T-cell (primary cell): ENCODE measurements at regions of chr2 and their contacts with region 1.

Region 1: DNA sequence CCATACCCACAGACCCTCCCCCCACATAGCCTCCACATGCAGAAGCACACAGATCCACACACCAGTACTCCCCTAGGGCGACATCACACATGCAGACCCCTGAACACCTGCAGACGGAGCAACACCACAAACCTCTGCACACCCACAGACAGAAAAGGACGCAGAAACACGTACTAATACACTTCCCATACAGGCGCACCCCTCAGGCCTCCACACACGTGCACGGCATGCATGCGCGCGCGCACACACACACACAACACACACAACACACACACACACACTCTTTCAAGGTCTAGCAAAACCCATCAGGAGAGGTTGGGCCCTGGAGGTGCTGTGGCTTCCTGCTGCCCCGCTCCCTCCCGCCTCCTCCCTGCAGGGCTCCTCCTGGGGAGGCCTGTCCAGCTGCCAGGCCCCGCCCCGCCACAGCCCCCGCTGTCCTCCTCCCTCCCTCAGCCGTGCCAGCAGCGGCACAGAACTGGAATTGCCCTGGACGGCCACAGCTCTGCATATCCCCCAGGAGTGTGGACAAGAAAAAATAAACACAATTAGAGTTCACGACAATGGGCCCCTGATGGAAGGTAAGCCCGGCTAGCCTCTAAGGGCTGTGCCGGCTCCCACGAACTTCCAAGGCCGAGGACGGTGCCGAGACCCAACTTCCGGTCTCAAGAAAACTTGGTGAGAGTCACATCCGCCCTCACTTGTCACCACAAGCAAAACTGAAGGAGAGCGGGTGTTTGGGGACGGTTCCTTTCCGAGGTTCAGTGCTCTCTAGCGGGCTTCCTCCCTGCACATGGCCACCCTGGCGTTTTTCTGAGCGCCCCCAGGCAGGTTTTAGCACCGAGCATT is 6.8 kb downstream of the ZFP36L2 start:
- DNase-seq: peak; percentile 71 to 91 (median 80)
- ATAC-seq: peak; percentile 44 to 58 (median 48)
- H3K4me3 ChIP-seq: peak overlapping the region; percentile 86 to 98
- H3K4me3 Mint-ChIP-seq: peak overlapping the region; percentile 74 to 98 (median 91)
- H3K27ac ChIP-seq: peak overlapping the region; percentile 94
- H3K27ac Mint-ChIP-seq: peak overlapping the region; percentile 94 to 97
- H3K4me1 ChIP-seq: peaks cover 27 to 67% of the 10 kb centered on the region in 2 experiments
- H3K4me1 Mint-ChIP-seq: peaks cover 52 to 59% (median 58%) of the 10 kb centered on the region in 3 donors
- H3K27me3 ChIP-seq: no peaks in the 10 kb centered on the region
- H3K27me3 Mint-ChIP-seq: peaks cover 0 to 3% of the 10 kb centered on the region in 2 donors

Region 2: GRCh38 chr2:43131024-43131889 is 88.3 kb before region 1 on chr2:
- CTCF ChIA-PET with region 1: interaction called, 6 to 24 read pairs
- POLR2A ChIA-PET with region 1: interaction called, 14 to 27 read pairs
- DNase-seq: peak; percentile 67 to 98 (median 86)
- ATAC-seq: peak; percentile 40 to 52 (median 47)
- H3K4me3 ChIP-seq: peak overlapping the region; percentile 27 to 49
- H3K4me3 Mint-ChIP-seq: peak overlapping the region; percentile 7 to 63 (median 52)
- H3K27ac ChIP-seq: peak overlapping the region; percentile 92
- H3K27ac Mint-ChIP-seq: peak overlapping the region; percentile 99 to 100
- H3K4me1 ChIP-seq: peaks cover 77 to 97% of the 10 kb centered on the region in 2 experiments
- H3K4me1 Mint-ChIP-seq: peaks cover 89 to 90% (median 89%) of the 10 kb centered on the region in 3 donors
- H3K27me3 ChIP-seq: no peaks in the 10 kb centered on the region
- H3K27me3 Mint-ChIP-seq: no peaks in the 10 kb centered on the region

Region 3: DNA sequence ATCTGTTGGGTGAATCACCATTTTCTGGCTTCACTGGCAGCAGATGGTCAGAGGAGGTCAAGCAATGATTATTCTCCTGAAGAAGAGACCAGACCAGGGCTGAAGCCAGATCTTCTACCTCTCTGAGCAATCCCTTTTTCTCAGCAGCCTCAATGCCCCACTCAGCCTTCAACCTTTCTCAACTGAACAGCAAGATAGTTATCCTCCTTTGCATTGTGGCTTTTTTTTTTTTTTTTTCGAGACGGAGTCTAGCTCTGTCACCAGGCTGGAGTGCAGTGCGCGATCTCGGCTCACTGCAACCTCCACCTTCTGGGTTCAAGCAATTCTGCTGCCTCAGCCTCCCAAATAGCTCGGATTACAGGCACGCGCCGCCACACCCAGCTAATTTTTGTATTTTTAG is 43.7 kb before region 1 on chr2:
- CTCF ChIA-PET with region 1: interaction called, 12 to 16 read pairs
- POLR2A ChIA-PET with region 1: interaction called, 18 to 22 read pairs
- DNase-seq: peak in 8 of 35 experiments; percentile 8 to 61 (median 33)
- ATAC-seq: no peak
- H3K4me3 ChIP-seq: peak overlapping the region in 1 of 2 donors; percentile 2
- H3K4me3 Mint-ChIP-seq: peak overlapping the region in 2 of 3 donors; percentile 31 to 77
- H3K27ac ChIP-seq: peak overlapping the region; percentile 100
- H3K27ac Mint-ChIP-seq: peak overlapping the region; percentile 97
- H3K4me1 ChIP-seq: peaks cover 39 to 93% of the 10 kb centered on the region in 2 experiments
- H3K4me1 Mint-ChIP-seq: peaks cover 87 to 88% (median 87%) of the 10 kb centered on the region in 3 donors
- H3K27me3 ChIP-seq: no peaks in the 10 kb centered on the region
- H3K27me3 Mint-ChIP-seq: no peaks in the 10 kb centered on the region